Activated CD4-positive, alpha-beta memory T cell treated with anti-CD3 and anti-CD28 coated beads for 36 hours (primary cell): ENCODE measurements at regions of chr7 and their contacts with region 1.

Region 1: GRCh38 chr7:21427182-21427870 is 557 bp upstream of the SP4 start:
- DNase-seq: peak; percentile 99
- H3K4me3 Mint-ChIP-seq: peak overlapping the region; percentile 98
- H3K27ac Mint-ChIP-seq: peak overlapping the region; percentile 99
- H3K4me1 Mint-ChIP-seq: peaks cover 37% of the 10 kb centered on the region
- H3K27me3 Mint-ChIP-seq: no peaks in the 10 kb centered on the region

Region 2: GRCh38 chr7:21261627-21262594 is 165.4 kb before region 1 on chr7:
- CTCF ChIA-PET with region 1: interaction called, 8 read pairs
- POLR2A ChIA-PET with region 1: no interaction called
- intact Hi-C with region 1: loop called (anchors 5 kb)
- DNase-seq: peak; percentile 55
- H3K4me3 Mint-ChIP-seq: no peak overlapping the region
- H3K27ac Mint-ChIP-seq: no peak overlapping the region
- H3K4me1 Mint-ChIP-seq: peaks cover 8% of the 10 kb centered on the region
- H3K27me3 Mint-ChIP-seq: peaks cover 3% of the 10 kb centered on the region

Region 3: GRCh38 chr7:21352540-21353387 is 74.6 kb before region 1 on chr7:
- CTCF ChIA-PET with region 1: interaction called, 3 read pairs
- POLR2A ChIA-PET with region 1: interaction called, 5 read pairs
- intact Hi-C with region 1: loop called (anchors 1 kb)
- DNase-seq: no peak
- H3K4me3 Mint-ChIP-seq: peak overlapping the region; percentile 39
- H3K27ac Mint-ChIP-seq: peak overlapping the region; percentile 77
- H3K4me1 Mint-ChIP-seq: peaks cover 55% of the 10 kb centered on the region
- H3K27me3 Mint-ChIP-seq: no peaks in the 10 kb centered on the region

Region 4: GRCh38 chr7:21939136-21939857 is 512.0 kb after region 1 on chr7:
- CTCF ChIA-PET with region 1: no interaction called
- POLR2A ChIA-PET with region 1: no interaction called
- intact Hi-C with region 1: loop called (anchors 1 kb)
- DNase-seq: peak; percentile 82
- H3K4me3 Mint-ChIP-seq: peak overlapping the region; percentile 23
- H3K27ac Mint-ChIP-seq: peak overlapping the region; percentile 85
- H3K4me1 Mint-ChIP-seq: peaks cover 59% of the 10 kb centered on the region
- H3K27me3 Mint-ChIP-seq: no peaks in the 10 kb centered on the region